Aorta (tissue), 5 donors: ENCODE measurements at regions of chr3 and their contacts with region 1.

Region 1: DNA sequence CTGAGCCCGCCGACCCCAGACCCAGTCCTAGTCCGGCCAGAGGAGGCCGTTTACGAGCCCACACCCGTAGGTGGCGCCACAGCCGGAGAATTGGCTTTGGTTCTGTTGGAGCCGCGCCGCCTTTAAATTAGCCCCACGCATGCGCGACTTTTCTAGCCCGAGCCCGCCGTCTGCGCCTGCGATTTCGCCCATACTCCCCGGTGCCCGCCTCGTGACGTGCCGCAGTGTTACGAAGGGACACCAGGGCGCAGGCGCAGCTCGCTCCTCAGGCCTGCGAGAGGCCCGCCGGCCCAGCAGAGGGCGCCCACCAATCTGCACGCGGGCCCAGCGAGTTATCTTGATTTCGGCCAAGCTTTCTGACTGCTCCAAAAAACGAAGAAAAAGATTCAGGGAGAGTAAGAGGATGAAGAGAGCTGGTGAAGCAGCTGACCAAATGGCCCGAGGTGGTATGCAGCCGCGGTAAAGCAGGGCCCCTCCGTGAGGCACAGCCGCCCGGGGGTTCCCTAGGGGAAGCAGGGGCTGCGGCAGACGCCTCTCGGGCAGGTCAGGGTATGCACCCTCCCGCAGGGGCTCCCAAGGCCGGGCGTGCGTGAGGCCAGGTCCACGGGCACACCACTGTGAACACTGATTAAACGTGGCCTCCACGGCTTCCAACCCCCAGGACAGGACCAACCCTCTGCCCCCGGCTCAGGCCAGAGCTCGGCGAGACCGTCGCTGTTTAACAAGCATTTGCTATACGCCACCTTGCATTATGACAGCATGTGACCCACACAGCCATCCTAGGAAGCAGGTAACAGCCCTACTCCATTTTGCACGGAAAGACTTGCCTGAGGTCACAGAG is 32.8 kb downstream of the RPN1 start:
- DNase-seq: peak; percentile 99 to 100
- ATAC-seq: peak; percentile 99
- H3K4me3 ChIP-seq: peak overlapping the region; percentile 5 to 66
- H3K27ac ChIP-seq: peak overlapping the region in 1 of 2 donors; percentile 4
- H3K4me1 ChIP-seq: no peaks in the 10 kb centered on the region
- H3K27me3 ChIP-seq: no peaks in the 10 kb centered on the region

Region 2: DNA sequence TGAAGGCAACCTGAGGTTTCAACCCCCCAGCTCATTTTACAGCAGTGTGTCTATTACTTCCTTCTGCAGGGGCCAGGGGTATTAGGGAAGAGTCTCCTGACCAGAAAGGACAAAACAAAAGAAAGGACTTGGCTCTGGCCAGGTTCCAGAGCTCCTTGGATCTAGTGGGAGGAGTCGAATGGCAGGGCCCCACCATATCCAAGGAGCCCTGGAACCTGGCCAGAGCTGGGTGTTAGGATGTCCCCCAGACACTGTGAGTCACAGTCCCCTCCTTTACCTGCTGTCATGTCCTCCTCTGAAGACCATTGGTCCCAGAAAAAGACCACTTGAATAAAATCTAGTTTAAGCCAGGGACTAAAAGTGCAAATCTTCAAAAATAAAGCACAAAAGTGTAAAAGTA is 351.3 kb before region 1 on chr3:
- intact Hi-C with region 1: no loop called
- DNase-seq: no peak
- ATAC-seq: no peak
- H3K4me3 ChIP-seq: no peak overlapping the region
- H3K27ac ChIP-seq: no peak overlapping the region
- H3K4me1 ChIP-seq: no peaks in the 10 kb centered on the region
- H3K27me3 ChIP-seq: no peaks in the 10 kb centered on the region

Region 3: GRCh38 chr3:128650096-128651050 is 32.6 kb after region 1 on chr3 and contains the start of gene RPN1:
- intact Hi-C with region 1: loop called in 1 of 2 experiments (anchors 5 kb)
- DNase-seq: peak; percentile 98 to 99
- ATAC-seq: peak; percentile 100
- H3K4me3 ChIP-seq: peak within 1 kb of the TSS; percentile 68 to 93
- H3K27ac ChIP-seq: peak within 1 kb of the TSS; percentile 30 to 68
- H3K4me1 ChIP-seq: peaks cover 0 to 2% of the 10 kb centered on the region in 2 donors
- H3K27me3 ChIP-seq: no peaks in the 10 kb centered on the region
- total RNA-seq, gene RPN1: 118 to 133 TPM

Region 4: GRCh38 chr3:128845778-128846485 is 228.2 kb after region 1 on chr3:
- intact Hi-C with region 1: loop called in 1 of 2 experiments (anchors 5 kb)
- DNase-seq: peak; percentile 93 to 95
- ATAC-seq: peak; percentile 91
- H3K4me3 ChIP-seq: peak overlapping the region; percentile 6 to 40
- H3K27ac ChIP-seq: peak overlapping the region in 1 of 2 donors; percentile 24
- H3K4me1 ChIP-seq: no peaks in the 10 kb centered on the region
- H3K27me3 ChIP-seq: no peaks in the 10 kb centered on the region

Region 5: DNA sequence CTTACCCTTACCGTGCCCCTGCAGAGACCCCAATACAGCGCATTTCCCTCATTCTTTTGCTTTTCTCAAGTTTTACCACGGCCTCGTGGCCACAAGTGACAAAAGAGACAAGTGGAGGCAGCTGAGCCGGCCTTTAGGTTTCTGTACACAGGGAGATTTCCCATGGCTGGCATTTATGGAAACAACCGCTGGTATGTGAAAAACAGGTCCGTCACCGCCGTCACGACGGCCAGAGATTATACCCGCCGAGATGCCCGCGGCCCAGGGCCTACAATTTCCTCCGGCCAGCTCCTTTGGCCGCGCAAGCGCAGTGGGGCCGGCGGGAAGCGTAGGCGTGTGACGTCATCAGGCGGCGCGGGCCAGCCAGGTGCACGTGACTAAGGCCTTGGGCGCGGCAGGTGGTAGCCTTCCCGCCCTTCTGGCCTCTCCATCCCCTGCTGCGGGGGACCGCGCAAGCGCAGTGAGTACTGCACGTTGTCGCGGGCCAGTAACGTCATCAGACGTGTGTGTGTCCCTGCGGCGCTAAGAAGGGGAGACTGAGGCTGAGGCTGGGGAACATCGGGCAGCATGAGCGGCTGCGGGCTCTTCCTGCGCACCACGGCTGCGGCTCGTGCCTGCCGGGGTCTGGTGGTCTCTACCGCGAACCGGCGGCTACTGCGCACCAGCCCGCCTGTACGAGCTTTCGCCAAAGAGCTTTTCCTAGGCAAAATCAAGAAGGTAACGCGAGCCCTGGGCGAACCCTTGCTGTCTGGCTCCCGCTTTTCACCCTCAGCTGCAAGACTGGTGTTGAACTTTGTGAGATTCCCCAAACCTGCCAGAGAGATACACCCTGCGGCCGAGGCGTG is 261.6 kb after region 1 on chr3 and contains the start of gene ACAD9:
- intact Hi-C with region 1: loop called in 1 of 2 experiments (anchors 5 kb)
- DNase-seq: peak; percentile 98
- ATAC-seq: peak; percentile 99
- H3K4me3 ChIP-seq: peak within 1 kb of the TSS; percentile 64 to 76
- H3K27ac ChIP-seq: peak within 1 kb of the TSS; percentile 84 to 92
- H3K4me1 ChIP-seq: peaks cover 0 to 2% of the 10 kb centered on the region in 2 donors
- H3K27me3 ChIP-seq: no peaks in the 10 kb centered on the region
- total RNA-seq, gene ACAD9: 30.7 to 52.8 TPM

Region 6: GRCh38 chr3:129233538-129233937 is 615.8 kb after region 1 on chr3:
- intact Hi-C with region 1: no loop called
- DNase-seq: peak in 1 of 2 donors; percentile 87
- ATAC-seq: peak; percentile 67
- H3K4me3 ChIP-seq: no peak overlapping the region
- H3K27ac ChIP-seq: no peak overlapping the region
- H3K4me1 ChIP-seq: no peaks in the 10 kb centered on the region
- H3K27me3 ChIP-seq: no peaks in the 10 kb centered on the region